ENCODE measurements at regions of chr16 and their contacts with region 1.

Region 1: DNA sequence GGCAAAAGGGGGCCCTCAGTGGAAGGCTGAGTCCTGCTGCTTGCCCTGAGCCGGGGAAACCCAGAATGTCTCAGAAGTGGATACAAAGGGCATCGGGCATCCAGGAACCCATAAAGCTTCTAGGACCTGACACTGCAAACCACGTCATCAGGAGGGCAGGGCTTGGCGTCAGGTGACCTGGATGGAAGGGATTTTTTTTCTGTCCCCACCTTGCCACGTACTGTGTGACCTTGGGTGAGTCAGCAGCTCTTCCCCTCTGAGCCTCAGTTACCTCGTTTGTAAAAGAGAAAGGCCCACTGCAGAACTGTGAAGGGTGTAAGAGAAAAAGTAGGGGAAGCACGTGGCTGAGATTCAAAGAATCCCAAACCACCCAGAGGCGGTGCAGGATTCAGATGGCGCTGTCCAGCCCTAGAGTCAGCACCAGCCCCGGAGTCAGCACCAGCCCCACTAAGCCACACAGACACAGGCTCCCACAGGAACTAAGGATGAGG is 53.7 kb downstream of the C16orf95 start:
- DNase-seq: peak; percentile 21
- H3K4me3 ChIP-seq: no peak overlapping the region
- H3K27ac ChIP-seq: no peak overlapping the region
- H3K4me1 ChIP-seq: no peaks in the 10 kb centered on the region
- H3K27me3 ChIP-seq: no peaks in the 10 kb centered on the region
- CTCF ChIP-seq: no peak
- EP300 ChIP-seq: no peak
- POLR2A ChIP-seq: no peak

Region 2: GRCh38 chr16:87062569-87063442 is 200.7 kb before region 1 on chr16:
- in situ Hi-C with region 1: loop called in 1 of 4 experiments (anchors 25 kb)
- intact Hi-C with region 1: no loop called
- DNase-seq: peak; percentile 55
- H3K4me3 ChIP-seq: no peak overlapping the region
- H3K27ac ChIP-seq: no peak overlapping the region
- H3K4me1 ChIP-seq: no peaks in the 10 kb centered on the region
- H3K27me3 ChIP-seq: peaks cover 60% of the 10 kb centered on the region
- CTCF ChIP-seq: peak; percentile 64 to 75 (median 72)
- EP300 ChIP-seq: no peak
- POLR2A ChIP-seq: no peak

Region 3: GRCh38 chr16:87278191-87279095 is 14.9 kb after region 1 on chr16:
- in situ Hi-C with region 1: no loop called
- intact Hi-C with region 1: no loop called
- DNase-seq: peak; percentile 75
- H3K4me3 ChIP-seq: no peak overlapping the region
- H3K27ac ChIP-seq: no peak overlapping the region
- H3K4me1 ChIP-seq: peaks cover 0 to 14% (median 7%) of the 10 kb centered on the region in 4 donors
- H3K27me3 ChIP-seq: peaks cover 10% of the 10 kb centered on the region
- CTCF ChIP-seq: peak; percentile 80 to 87 (median 82)
- EP300 ChIP-seq: no peak
- POLR2A ChIP-seq: no peak